Naive thymus-derived CD4-positive, alpha-beta T cell (primary cell): ENCODE measurements at regions of chr2 and their contacts with region 1.

Region 1: GRCh38 chr2:3242747-3243369 is 134.8 kb downstream of the EIPR1 start:
- DNase-seq: peak in 7 of 9 donors; percentile 62 to 79 (median 74)
- ATAC-seq: peak; percentile 90
- H3K4me3 ChIP-seq: peak overlapping the region; percentile 12
- H3K4me3 Mint-ChIP-seq: peak overlapping the region in 9 of 10 donors; percentile 29 to 86 (median 70)
- H3K27ac ChIP-seq: peak overlapping the region; percentile 69
- H3K27ac Mint-ChIP-seq: peak overlapping the region in 6 of 9 donors; percentile 72 to 93 (median 86)
- H3K4me1 ChIP-seq: peaks cover 33 to 59% of the 10 kb centered on the region in 2 donors
- H3K4me1 Mint-ChIP-seq: peaks cover 17 to 36% (median 23%) of the 10 kb centered on the region in 7 donors
- H3K27me3 ChIP-seq: no peaks in the 10 kb centered on the region
- H3K27me3 Mint-ChIP-seq: no peaks in the 10 kb centered on the region

Region 2: DNA sequence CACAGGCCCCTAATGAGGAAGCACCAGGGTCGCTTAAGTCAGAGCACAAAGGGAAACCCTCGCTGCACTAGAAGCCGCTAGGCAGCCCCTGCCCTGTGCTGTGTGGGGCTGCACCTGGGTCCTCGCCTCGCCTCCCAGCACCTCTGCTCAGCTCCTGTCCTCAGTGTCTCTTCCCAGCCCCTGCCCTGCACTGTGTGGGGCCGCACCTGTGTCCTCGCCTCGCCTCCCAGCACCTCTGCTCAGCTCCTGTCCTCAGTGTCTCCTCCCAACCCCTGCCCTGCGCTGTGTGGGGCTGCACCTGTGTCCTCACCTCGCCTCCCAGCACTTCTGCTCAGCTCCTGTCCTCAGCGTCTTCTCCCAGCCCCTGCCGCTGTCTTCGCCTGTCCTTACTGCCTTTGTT is 208.0 kb before region 1 on chr2:
- CTCF ChIA-PET with region 1: no interaction called
- POLR2A ChIA-PET with region 1: no interaction called
- intact Hi-C with region 1: no loop called
- DNase-seq: no peak
- ATAC-seq: peak; percentile 48
- H3K4me3 ChIP-seq: no peak overlapping the region
- H3K4me3 Mint-ChIP-seq: no peak overlapping the region
- H3K27ac ChIP-seq: no peak overlapping the region
- H3K27ac Mint-ChIP-seq: no peak overlapping the region
- H3K4me1 ChIP-seq: no peaks in the 10 kb centered on the region
- H3K4me1 Mint-ChIP-seq: no peaks in the 10 kb centered on the region
- H3K27me3 ChIP-seq: no peaks in the 10 kb centered on the region
- H3K27me3 Mint-ChIP-seq: peaks cover 0 to 17% (median 8%) of the 10 kb centered on the region in 5 donors

Region 3: GRCh38 chr2:3223080-3223923 is 19.6 kb before region 1 on chr2:
- CTCF ChIA-PET with region 1: interaction called, 6 read pairs
- POLR2A ChIA-PET with region 1: no interaction called
- intact Hi-C with region 1: loop called (anchors 1 to 2 kb)
- DNase-seq: peak in 7 of 9 donors; percentile 4 to 87 (median 23)
- ATAC-seq: peak; percentile 83
- H3K4me3 ChIP-seq: no peak overlapping the region
- H3K4me3 Mint-ChIP-seq: peak overlapping the region in 8 of 10 donors; percentile 30 to 66 (median 58)
- H3K27ac ChIP-seq: peak overlapping the region; percentile 65
- H3K27ac Mint-ChIP-seq: peak overlapping the region; percentile 81 to 96 (median 93)
- H3K4me1 ChIP-seq: peaks cover 17 to 22% of the 10 kb centered on the region in 2 donors
- H3K4me1 Mint-ChIP-seq: peaks cover 16 to 37% (median 32%) of the 10 kb centered on the region in 7 donors
- H3K27me3 ChIP-seq: no peaks in the 10 kb centered on the region
- H3K27me3 Mint-ChIP-seq: no peaks in the 10 kb centered on the region